HCT116 (cell line): ENCODE measurements at regions of chr4 and their contacts with region 1.

Region 1: GRCh38 chr4:151801547-151802516 is 41.0 kb upstream of the GATB start:
- DNase-seq: peak; percentile 51
- ATAC-seq: peak; percentile 96
- H3K4me3 ChIP-seq: no peak overlapping the region
- H3K27ac ChIP-seq: no peak overlapping the region
- H3K4me1 ChIP-seq: peaks cover 0 to 8% of the 10 kb centered on the region in 2 experiments; a peak in 1 of 4 replicates
- H3K27me3 ChIP-seq: no peaks in the 10 kb centered on the region
- CTCF ChIP-seq: peak; percentile 86 to 96 (median 95)
- POLR2A ChIP-seq: no peak
- RAD21 ChIP-seq: peak; percentile 57

Region 2: GRCh38 chr4:151658959-151659600 is 142.8 kb before region 1 on chr4:
- CTCF ChIA-PET with region 1: no interaction called
- POLR2A ChIA-PET with region 1: no interaction called
- RAD21 ChIA-PET with region 1: no interaction called
- intact Hi-C with region 1: no loop called
- DNase-seq: no peak
- ATAC-seq: no peak
- H3K4me3 ChIP-seq: no peak overlapping the region
- H3K27ac ChIP-seq: no peak overlapping the region
- H3K4me1 ChIP-seq: no peaks in the 10 kb centered on the region
- H3K27me3 ChIP-seq: no peaks in the 10 kb centered on the region
- CTCF ChIP-seq: no peak
- POLR2A ChIP-seq: no peak
- RAD21 ChIP-seq: no peak

Region 3: GRCh38 chr4:151783867-151784266 is 18.0 kb before region 1 on chr4:
- CTCF ChIA-PET with region 1: interaction called, 10 read pairs
- POLR2A ChIA-PET with region 1: no interaction called
- RAD21 ChIA-PET with region 1: no interaction called
- intact Hi-C with region 1: no loop called
- DNase-seq: no peak
- ATAC-seq: no peak
- H3K4me3 ChIP-seq: no peak overlapping the region
- H3K27ac ChIP-seq: no peak overlapping the region
- H3K4me1 ChIP-seq: no peaks in the 10 kb centered on the region
- H3K27me3 ChIP-seq: no peaks in the 10 kb centered on the region
- CTCF ChIP-seq: no peak
- POLR2A ChIP-seq: no peak
- RAD21 ChIP-seq: no peak